Naive thymus-derived CD8-positive, alpha-beta T cell (primary cell): ENCODE measurements at regions of chr18 and their contacts with region 1.

Region 1: DNA sequence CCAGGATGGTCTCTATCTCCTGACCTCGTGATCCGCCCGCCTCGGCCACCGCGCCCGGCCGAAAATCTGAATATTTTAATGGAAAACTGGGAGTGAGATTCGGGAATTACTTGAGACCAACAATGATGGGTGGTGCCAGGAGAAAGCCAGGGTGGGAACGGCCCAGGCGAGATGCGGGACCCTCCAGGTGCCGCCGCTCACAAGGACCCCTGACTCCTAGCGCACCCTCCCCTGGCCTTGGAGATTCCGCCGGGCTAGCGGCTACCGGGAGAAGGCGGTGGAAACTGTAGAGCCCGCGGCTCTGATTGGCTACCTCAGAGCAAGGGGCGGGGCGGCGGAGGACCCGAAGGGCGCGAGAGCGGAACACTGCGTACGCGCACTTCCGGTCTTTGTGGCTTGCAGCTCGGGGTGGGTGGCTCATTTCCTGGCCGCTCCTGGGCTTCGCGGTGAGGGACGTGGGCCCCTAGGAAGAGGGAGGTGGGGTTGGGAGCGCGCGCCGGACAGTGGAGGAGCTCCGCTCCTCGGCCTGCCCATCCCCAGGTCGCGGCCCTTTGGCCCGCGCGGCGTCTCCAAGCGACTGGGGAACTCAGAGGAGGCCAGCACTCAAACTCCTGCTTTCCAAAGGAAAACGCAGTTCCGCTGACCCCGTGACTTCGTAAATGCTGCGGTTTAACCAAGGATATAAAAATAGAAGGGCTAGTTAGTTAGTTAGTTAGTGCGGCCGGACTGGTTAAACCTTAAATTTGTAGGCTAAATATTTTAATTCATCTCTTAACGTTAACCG is at the start of gene ZNF397:
- DNase-seq: peak; percentile 89 to 98 (median 92)
- ATAC-seq: peak; percentile 96 to 97
- H3K4me3 Mint-ChIP-seq: peak within 1 kb of the TSS; percentile 95 to 99 (median 97)
- H3K27ac Mint-ChIP-seq: peak within 1 kb of the TSS; percentile 92 to 99 (median 98)
- H3K4me1 Mint-ChIP-seq: peaks cover 14 to 38% (median 32%) of the 10 kb centered on the region in 4 donors
- H3K27me3 Mint-ChIP-seq: no peaks in the 10 kb centered on the region
- polyA plus RNA-seq, gene ZNF397: 3.9 to 8.2 (median 6.9) TPM

Region 2: DNA sequence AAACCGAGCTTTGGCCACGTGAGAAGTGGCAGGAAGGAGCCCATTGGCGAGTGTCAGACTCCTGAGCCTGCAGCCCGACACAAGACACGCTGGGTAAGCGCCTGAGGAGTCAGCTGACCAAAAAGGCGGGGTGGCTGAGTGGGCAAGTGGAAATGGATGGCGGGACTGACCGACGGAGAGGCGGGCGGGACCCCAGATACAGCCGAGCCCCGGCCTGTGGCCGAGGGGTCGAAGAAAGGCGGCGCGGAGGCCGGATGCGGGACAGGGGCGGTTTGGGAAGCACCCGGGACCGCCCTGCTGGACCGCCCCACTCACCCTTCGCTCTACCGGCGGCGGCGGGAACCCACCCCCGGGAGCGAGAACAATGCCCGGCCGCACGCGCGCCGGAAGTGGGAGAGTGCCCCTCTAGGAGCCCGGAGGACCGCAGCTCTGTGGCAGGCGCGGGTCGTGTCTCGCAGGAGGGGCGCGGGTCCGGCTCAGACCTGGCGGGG is 26.4 kb after region 1 on chr18:
- POLR2A ChIA-PET with region 1: interaction called, 48 read pairs
- DNase-seq: peak; percentile 54 to 86 (median 64)
- ATAC-seq: peak; percentile 82 to 87
- H3K4me3 Mint-ChIP-seq: peak overlapping the region; percentile 92 to 99 (median 97)
- H3K27ac Mint-ChIP-seq: peak overlapping the region; percentile 96 to 99 (median 98)
- H3K4me1 Mint-ChIP-seq: peaks cover 24 to 33% (median 28%) of the 10 kb centered on the region in 4 donors
- H3K27me3 Mint-ChIP-seq: no peaks in the 10 kb centered on the region

Region 3: GRCh38 chr18:35290073-35290735 is 49.3 kb after region 1 on chr18 and contains the start of gene ZSCAN30:
- POLR2A ChIA-PET with region 1: interaction called, 15 read pairs
- DNase-seq: peak; percentile 92 to 97 (median 94)
- ATAC-seq: peak; percentile 94
- H3K4me3 Mint-ChIP-seq: peak within 1 kb of the TSS; percentile 91 to 100 (median 99)
- H3K27ac Mint-ChIP-seq: peak within 1 kb of the TSS; percentile 96 to 100 (median 99)
- H3K4me1 Mint-ChIP-seq: peaks cover 32 to 80% (median 76%) of the 10 kb centered on the region in 4 donors
- H3K27me3 Mint-ChIP-seq: peaks cover 0 to 1% (median 0%) of the 10 kb centered on the region in 5 donors
- polyA plus RNA-seq, gene ZSCAN30: 4.3 to 7.5 (median 5.2) TPM

Region 4: GRCh38 chr18:35343936-35344735 is 103.3 kb after region 1 on chr18 and contains the start of gene ZNF24:
- POLR2A ChIA-PET with region 1: interaction called, 29 read pairs
- DNase-seq: peak; percentile 86 to 96 (median 90)
- ATAC-seq: peak; percentile 84 to 87
- H3K4me3 Mint-ChIP-seq: peak within 1 kb of the TSS; percentile 95 to 100 (median 98)
- H3K27ac Mint-ChIP-seq: peak within 1 kb of the TSS; percentile 92 to 99 (median 98)
- H3K4me1 Mint-ChIP-seq: peaks cover 19 to 65% (median 48%) of the 10 kb centered on the region in 4 donors
- H3K27me3 Mint-ChIP-seq: no peaks in the 10 kb centered on the region
- polyA plus RNA-seq, gene ZNF24: 78.0 to 92.9 (median 90.2) TPM